Activated T-helper 1 cell treated with anti-CD3 and anti-CD28 coated beads, Interleukin-12 subunit alpha, Interleukin-12 subunit beta, Interleukin-2, Interleukin-4 antibody, amounts not matched to agents 30 ng/mL and 10 ng/mL and 1 ng/mL, durations not matched to agents 14 hours and 24 hours and 36 hours (primary cell): ENCODE measurements at regions of chr17 and their contacts with region 1.

Region 1: DNA sequence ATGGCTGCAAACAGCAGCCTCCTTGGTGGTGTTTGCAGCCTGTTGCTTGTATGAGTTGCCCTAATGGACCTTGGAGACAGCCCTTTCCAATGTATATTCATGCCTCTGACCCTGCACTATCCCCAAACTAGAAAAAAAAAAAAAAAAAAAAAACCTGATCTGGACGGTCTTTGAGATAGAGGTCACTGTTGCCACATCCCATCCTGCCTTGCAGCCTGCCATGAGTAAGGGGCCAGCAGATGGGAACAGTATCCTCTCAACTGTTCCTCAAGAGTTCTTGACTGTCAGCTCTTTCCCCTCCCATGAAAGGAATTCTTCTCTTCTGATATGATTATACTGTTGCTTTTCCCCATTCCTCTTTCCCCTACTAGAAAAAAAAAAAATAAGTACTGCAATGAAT is 152.4 kb downstream of the SSH2 start:
- DNase-seq: no peak
- H3K4me3 Mint-ChIP-seq: no peak overlapping the region
- H3K27ac Mint-ChIP-seq: no peak overlapping the region
- H3K4me1 Mint-ChIP-seq: peaks cover 16% of the 10 kb centered on the region
- H3K27me3 Mint-ChIP-seq: no peaks in the 10 kb centered on the region

Region 2: DNA sequence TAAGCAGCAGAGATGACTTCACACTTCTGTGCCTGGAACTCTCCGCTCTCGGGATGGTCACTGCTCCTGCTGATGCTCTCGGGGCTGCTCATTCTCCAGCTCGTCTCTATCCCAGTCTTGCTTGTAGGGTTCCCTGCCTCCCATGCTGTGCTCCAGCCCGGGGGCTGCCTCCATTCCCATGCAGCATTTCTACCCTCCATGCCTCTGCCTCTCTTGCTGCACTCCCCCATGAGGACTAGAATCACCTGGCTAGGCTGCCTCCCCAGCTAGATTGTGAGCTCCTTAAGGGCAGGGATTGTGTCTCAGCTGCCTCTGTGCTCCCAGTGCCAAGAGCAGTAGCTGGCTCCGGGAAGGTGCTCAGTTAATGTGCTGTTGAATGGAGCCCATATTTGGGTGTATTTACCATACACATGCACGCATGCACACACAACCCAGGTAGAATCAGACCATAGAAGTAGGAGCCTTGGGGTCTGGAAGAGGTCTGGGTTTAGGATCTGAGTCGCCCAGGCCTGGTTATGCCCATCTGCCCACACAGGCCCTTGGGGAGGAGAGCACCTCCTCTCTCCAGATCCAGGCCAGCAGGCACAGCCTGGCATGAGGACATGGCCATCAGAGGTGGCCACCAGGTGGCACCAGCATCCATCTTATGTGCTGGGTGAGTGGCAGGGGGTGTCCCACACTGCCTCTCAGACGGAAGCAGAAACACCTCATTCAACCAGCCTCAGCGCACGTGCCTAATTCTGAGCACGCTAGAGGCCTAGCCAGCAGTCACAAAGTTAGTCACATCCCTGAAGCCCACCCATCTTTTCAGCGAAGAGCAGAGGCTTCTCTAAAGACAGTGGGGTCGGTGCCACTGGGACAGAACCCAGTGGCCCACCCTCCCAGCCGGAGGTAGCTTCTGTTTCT is 197.5 kb before region 1 on chr17:
- intact Hi-C with region 1: loop called (anchors 1 kb)
- DNase-seq: peak; percentile 79
- H3K4me3 Mint-ChIP-seq: no peak overlapping the region
- H3K27ac Mint-ChIP-seq: peak overlapping the region; percentile 90
- H3K4me1 Mint-ChIP-seq: peaks cover 23% of the 10 kb centered on the region
- H3K27me3 Mint-ChIP-seq: no peaks in the 10 kb centered on the region

Region 3: DNA sequence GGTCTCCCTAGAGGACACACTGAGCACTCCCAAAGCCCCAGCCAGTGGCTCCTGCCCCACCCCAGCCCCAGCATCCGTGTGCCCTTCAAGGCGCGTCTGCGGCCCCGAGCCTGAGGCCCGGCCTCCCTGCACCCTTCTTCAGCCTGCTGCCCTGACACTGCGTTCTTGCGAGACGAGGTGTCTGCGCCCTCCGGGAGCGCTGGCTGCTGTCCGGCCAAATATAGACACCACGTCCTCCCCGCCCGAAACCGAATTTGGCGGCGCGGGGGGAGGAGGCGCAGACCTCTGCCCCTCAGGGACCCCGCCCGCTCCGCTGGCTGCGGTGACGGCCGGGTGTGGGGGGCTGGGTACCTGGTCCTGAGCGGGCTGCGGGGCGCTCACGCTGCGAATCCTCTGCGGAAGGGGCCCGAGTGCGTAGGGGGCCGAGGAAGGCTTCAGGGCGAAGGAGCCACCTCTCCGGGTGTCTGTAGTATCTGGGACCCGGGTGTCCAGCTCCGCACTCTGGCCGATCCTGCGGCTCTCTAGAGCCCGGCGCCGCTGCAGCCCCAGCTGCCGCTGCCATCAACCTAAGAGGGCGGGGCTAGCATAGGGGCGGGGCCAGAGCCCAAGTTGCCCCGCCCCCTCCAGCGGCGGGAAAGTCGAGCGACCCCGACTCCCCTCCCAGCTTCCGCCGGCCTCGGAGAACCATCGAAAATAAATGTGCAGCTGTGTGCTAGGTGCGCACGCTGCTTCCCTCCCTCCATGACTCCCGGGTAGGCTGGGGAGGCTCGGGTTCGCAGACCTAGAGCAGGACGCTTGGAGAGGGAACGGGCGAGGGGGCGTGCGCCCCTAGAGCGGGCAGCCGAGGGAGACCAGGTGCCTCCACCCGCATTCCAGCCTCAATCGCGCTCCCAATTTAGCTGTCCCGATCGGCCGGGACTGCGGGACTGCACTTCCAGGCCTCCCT is 155.1 kb before region 1 on chr17 and contains the start of gene CORO6:
- intact Hi-C with region 1: loop called (anchors 1 kb)
- DNase-seq: peak; percentile 56
- H3K4me3 Mint-ChIP-seq: peak within 1 kb of the TSS; percentile 80
- H3K27ac Mint-ChIP-seq: peak within 1 kb of the TSS; percentile 81
- H3K4me1 Mint-ChIP-seq: peaks cover 41% of the 10 kb centered on the region
- H3K27me3 Mint-ChIP-seq: no peaks in the 10 kb centered on the region
- total RNA-seq, gene CORO6: 5.1 and 6.4 TPM in 2 replicates

Region 4: GRCh38 chr17:29640413-29640812 is 137.2 kb before region 1 on chr17:
- intact Hi-C with region 1: loop called (anchors 1 kb)
- DNase-seq: no peak
- H3K4me3 Mint-ChIP-seq: no peak overlapping the region
- H3K27ac Mint-ChIP-seq: peak overlapping the region; percentile 36
- H3K4me1 Mint-ChIP-seq: peaks cover 27% of the 10 kb centered on the region
- H3K27me3 Mint-ChIP-seq: no peaks in the 10 kb centered on the region

Region 5: DNA sequence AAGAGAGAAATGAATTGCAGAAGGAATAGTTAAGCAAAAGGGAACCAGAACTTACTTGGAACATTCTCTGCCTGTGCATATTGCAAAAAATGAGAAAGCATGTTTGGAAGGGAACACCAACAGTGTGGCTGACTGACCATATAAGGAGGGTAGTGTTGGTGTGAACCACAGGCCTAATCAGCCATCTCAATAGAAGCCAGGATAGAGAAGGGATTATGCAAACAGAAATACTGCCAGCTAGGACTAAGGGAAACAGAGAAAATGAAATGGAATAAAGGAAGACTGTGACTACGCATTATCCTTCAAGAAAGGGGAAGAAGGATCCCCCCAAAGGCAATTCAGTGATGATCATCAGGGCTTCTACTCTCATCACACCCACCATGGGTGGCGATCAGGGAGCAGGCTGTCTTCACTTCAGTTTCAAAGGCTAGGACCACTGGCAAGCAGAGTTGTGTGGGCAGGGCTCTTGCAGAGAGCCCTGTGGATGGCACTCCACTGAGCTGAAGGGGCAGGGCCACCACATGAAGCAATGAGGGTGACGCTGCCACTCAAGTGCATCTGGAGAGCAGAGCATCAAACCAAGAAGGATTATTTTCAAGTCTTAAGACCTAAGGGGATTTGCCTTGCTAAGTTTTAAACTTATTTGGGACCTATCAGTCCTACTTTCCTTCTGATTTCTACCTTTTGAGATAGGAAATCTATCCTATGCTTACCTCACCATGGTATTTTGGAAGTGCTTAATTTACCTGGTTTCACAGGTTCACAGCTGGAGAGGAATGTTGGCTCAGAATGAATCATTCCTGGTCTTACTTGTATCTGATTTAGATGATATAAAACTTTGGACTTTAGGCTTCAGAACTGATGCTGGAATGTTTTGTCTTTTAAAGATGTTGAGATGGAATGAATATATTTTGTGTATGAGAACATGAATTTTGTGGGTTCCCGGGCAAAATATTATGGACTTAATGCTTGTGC is 11.8 kb after region 1 on chr17:
- intact Hi-C with region 1: no loop called
- DNase-seq: no peak
- H3K4me3 Mint-ChIP-seq: no peak overlapping the region
- H3K27ac Mint-ChIP-seq: no peak overlapping the region
- H3K4me1 Mint-ChIP-seq: no peaks in the 10 kb centered on the region
- H3K27me3 Mint-ChIP-seq: no peaks in the 10 kb centered on the region

Region 6: GRCh38 chr17:29883497-29883896 is 105.8 kb after region 1 on chr17:
- intact Hi-C with region 1: no loop called
- DNase-seq: no peak
- H3K4me3 Mint-ChIP-seq: no peak overlapping the region
- H3K27ac Mint-ChIP-seq: peak overlapping the region; percentile 9
- H3K4me1 Mint-ChIP-seq: peaks cover 16% of the 10 kb centered on the region
- H3K27me3 Mint-ChIP-seq: peaks cover 2% of the 10 kb centered on the region